RWPE1 (cell line): ENCODE measurements at regions of chr7 and their contacts with region 1.

Region 1: DNA sequence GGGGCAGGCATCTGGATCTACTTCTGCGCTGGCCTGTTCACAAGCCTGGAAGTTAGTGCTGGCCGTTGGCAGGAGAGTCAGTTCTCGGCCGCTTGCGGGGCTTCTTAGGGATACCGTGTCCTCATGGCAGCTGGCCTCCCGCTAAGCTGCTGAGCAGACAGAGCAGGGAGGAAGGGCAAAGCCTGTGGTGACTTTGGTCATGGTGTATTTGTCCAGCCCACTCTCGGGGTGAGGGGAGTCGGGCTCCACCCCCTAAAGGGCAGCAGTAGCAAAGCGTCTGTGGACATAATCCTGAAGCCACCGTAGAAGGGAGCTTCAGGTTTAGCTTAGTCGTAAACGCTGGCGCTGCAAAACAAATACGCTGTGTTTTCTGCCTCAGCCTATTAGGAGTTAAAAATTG is 12.2 kb downstream of the UBE3C start:
- DNase-seq: no peak
- H3K27ac ChIP-seq: no peak overlapping the region
- CTCF ChIP-seq: no peak

Region 2: GRCh38 chr7:157238087-157238486 is 87.2 kb after region 1 on chr7:
- CTCF ChIA-PET with region 1: no interaction called
- POLR2A ChIA-PET with region 1: interaction called, 12 read pairs
- DNase-seq: no peak
- H3K27ac ChIP-seq: no peak overlapping the region
- CTCF ChIP-seq: no peak